ENCODE measurements at regions of chr17 and their contacts with region 1.

Region 1: GRCh38 chr17:40317880-40318829 is 9.2 kb downstream of the RARA start:
- DNase-seq: peak; percentile 95
- H3K4me3 Mint-ChIP-seq: peak overlapping the region; percentile 99
- H3K27ac Mint-ChIP-seq: peak overlapping the region; percentile 99
- H3K4me1 Mint-ChIP-seq: peaks cover 80% of the 10 kb centered on the region
- H3K27me3 Mint-ChIP-seq: peaks cover 2% of the 10 kb centered on the region

Region 2: DNA sequence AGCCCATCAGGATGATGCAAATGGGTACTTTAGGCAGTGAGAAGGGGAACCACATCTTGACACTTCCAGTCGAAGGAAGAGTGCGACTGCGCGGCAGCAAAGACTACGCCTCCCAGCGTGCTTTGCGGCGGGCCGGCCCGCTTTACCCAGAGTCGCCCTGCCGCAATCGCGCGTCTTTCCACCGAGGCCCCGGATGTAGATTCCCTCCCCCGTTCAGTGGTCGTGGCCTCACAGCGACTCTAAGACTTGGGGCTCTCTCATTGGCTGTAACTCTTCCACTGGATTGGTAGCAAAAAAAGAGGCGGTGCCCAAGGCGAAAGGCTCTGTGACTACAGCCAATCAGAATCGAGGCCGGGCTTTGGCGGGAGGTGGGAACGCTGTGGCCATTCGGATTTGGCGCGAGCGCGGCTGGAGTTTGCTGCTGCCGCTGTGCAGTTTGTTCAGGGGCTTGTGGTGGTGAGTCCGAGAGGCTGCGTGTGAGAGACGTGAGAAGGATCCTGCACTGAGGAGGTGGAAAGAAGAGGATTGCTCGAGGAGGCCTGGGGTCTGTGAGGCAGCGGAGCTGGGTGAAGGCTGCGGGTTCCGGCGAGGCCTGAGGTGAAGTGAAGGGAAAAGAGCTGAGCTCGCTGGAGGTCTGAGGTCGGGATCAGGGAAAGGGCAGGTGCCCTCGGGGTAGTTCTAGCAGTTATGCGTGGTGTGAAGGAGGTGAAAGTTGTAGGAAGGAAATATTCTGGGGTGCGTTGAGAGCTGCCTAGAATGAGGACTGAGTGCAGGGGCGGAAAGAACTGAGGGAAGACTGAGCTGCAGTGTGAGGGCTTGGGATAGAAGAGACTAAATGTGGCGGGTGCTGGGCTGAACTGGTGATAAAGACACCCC is 30.4 kb before region 1 on chr17 and contains the start of gene CDC6:
- CTCF ChIA-PET with region 1: interaction called, 8 read pairs
- POLR2A ChIA-PET with region 1: interaction called, 4 read pairs
- intact Hi-C with region 1: loop called (anchors 1 kb)
- DNase-seq: peak; percentile 100
- H3K4me3 Mint-ChIP-seq: peak within 1 kb of the TSS; percentile 99
- H3K27ac Mint-ChIP-seq: peak within 1 kb of the TSS; percentile 94
- H3K4me1 Mint-ChIP-seq: peaks cover 56% of the 10 kb centered on the region
- H3K27me3 Mint-ChIP-seq: no peaks in the 10 kb centered on the region
- total RNA-seq, gene CDC6: 95.6 to 95.7 TPM

Region 3: DNA sequence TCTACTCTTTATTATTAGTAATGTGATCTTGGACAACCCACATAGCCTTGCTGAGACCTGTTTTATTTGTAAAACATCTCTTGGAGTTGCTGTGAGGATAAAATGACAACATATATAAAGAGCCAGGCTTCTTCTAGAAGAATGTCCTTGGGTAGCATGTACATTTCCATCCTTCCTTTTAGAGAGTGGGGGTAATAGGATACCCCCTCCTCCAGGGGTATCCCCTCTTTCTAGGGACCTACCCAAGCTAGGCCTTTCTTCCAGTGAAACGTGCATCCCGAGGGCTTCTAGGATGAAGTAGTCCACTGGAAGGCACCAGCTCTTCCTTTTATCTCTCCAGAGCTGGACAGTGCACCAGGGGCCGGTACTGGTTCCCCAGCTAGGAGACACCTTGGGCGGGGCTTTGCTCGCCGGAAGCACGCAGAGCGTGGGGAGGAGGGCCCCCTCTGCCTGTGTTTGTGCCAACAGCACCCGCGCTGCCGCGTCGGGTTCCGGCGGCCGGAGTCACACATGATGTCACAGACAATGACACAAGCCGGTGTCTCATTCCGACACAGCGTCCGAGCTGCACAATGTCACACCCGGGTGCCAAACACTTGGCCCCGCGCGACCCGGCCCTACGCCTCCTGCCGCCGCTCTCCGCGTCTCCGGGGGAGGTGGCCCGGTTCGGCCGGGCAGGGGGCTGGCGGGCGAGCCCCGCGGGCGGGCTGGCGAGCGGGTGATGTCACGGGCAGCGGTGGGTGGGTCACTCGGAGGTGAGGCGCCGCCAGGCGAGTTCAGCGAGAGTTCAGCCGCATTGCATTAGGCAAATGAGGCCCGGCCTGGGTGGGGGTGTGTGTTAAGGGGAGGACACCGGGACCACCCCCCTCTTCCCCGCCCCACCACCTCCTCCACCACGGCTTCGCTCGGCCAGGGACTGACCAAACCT is 23.0 kb after region 1 on chr17:
- CTCF ChIA-PET with region 1: interaction called, 6 read pairs
- POLR2A ChIA-PET with region 1: interaction called, 9 read pairs
- intact Hi-C with region 1: loop called (anchors 1 kb)
- DNase-seq: peak; percentile 94
- H3K4me3 Mint-ChIP-seq: peak overlapping the region; percentile 66
- H3K27ac Mint-ChIP-seq: peak overlapping the region; percentile 81
- H3K4me1 Mint-ChIP-seq: peaks cover 75% of the 10 kb centered on the region
- H3K27me3 Mint-ChIP-seq: no peaks in the 10 kb centered on the region

Region 4: GRCh38 chr17:40362696-40363110 is 44.5 kb after region 1 on chr17:
- CTCF ChIA-PET with region 1: interaction called, 4 read pairs
- POLR2A ChIA-PET with region 1: no interaction called
- intact Hi-C with region 1: loop called (anchors 5 kb)
- DNase-seq: peak; percentile 93
- H3K4me3 Mint-ChIP-seq: peak overlapping the region; percentile 42
- H3K27ac Mint-ChIP-seq: no peak overlapping the region
- H3K4me1 Mint-ChIP-seq: peaks cover 10% of the 10 kb centered on the region
- H3K27me3 Mint-ChIP-seq: peaks cover 14% of the 10 kb centered on the region

Region 5: GRCh38 chr17:40378966-40379365 is 60.8 kb after region 1 on chr17:
- CTCF ChIA-PET with region 1: no interaction called
- POLR2A ChIA-PET with region 1: no interaction called
- intact Hi-C with region 1: no loop called
- DNase-seq: no peak
- H3K4me3 Mint-ChIP-seq: no peak overlapping the region
- H3K27ac Mint-ChIP-seq: no peak overlapping the region
- H3K4me1 Mint-ChIP-seq: peaks cover 9% of the 10 kb centered on the region
- H3K27me3 Mint-ChIP-seq: no peaks in the 10 kb centered on the region

Region 6: GRCh38 chr17:40480501-40481003 is 162.4 kb after region 1 on chr17:
- CTCF ChIA-PET with region 1: no interaction called
- POLR2A ChIA-PET with region 1: no interaction called
- intact Hi-C with region 1: loop called (anchors 2 kb)
- DNase-seq: peak; percentile 95
- H3K4me3 Mint-ChIP-seq: peak overlapping the region; percentile 76
- H3K27ac Mint-ChIP-seq: peak overlapping the region; percentile 98
- H3K4me1 Mint-ChIP-seq: peaks cover 70% of the 10 kb centered on the region
- H3K27me3 Mint-ChIP-seq: no peaks in the 10 kb centered on the region

Region 7: DNA sequence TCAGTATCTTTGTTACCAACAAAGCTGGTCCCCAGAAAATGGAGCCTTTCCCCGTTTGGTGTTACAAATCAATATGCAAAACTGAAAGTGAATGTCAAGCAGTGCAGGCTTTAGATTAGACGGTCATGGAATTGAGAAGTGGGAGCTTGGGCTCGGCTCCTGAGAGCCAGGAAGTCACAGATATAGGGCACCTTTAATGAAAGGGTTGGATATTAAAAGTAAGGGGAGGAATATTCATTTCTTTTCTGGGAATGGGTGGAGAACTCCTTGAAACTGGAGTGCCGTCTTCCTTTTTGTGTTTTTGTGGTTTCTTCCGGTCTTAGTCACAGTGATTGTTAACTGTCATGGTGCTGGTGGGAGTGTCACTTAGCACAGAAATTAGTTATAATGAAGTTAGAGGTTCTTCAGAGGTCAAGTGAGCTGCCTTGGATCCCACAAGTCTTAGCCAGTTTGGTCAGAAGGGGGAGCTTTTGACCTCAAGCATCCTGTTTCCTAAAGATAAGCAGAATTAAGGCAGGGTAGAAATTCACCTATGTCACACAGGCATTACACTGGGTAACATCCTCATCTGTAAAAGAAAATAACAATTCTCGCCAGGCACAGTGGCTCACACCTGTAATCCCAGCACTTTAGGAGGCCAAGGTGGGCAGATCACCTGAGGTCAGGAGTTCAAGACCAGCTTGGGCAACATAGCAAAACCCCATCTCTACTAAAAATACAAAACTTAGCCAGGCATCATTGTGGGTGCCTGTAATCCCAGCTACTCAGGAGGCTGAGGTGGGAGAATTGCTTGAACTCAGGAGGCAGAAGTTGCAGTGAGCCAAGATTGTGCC is 1361.0 kb after region 1 on chr17:
- CTCF ChIA-PET with region 1: no interaction called
- POLR2A ChIA-PET with region 1: no interaction called
- intact Hi-C with region 1: loop called (anchors 5 kb)
- DNase-seq: peak; percentile 81
- H3K4me3 Mint-ChIP-seq: peak overlapping the region; percentile 79
- H3K27ac Mint-ChIP-seq: peak overlapping the region; percentile 97
- H3K4me1 Mint-ChIP-seq: peaks cover 41% of the 10 kb centered on the region
- H3K27me3 Mint-ChIP-seq: no peaks in the 10 kb centered on the region

Measured in activated CD4-positive, alpha-beta memory T cell treated with anti-CD3 and anti-CD28 coated beads for 36 hours (primary cell).